CD4-positive, alpha-beta memory T cell (primary cell): ENCODE measurements at regions of chr7 and their contacts with region 1.

Region 1: DNA sequence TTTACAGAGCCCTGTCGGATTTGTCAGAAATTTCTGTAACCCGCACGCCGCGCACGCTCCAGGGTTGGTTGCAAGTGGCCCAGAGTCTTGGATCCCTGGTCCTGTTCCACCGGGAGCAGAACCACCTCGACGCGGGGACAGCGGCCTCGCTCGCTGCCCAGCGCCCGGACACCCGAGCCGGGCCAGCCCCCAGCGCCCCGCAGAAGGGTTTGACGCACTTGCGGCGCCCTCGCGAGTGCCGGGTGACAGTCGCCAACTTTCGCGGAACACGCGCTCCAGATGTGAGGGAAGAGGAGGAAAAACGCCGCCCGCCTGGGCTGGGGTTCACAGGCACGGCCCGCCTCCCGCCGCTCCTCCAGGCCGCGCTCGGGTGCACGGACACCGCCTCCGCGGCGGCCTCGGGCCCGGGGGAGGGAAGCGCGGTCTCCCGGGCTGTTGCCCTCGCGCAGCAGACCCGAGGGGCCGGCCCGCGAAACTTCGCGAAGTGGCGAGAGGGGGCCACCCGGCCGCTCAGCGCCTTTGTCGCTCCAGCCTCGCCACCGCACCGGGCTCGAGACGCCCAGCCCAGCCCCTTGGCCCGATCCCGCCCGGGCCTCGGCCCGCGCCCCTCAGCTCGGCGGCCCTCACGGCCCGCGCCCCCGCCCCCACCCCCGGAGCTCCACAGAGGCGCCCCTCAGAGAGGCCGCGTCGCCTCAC is 514 bp downstream of the RNF216 start:
- DNase-seq: peak in 4 of 5 donors; percentile 22 to 44 (median 37)
- H3K4me3 ChIP-seq: peak overlapping the region in 1 of 2 donors; percentile 57
- H3K4me3 Mint-ChIP-seq: peak overlapping the region; percentile 77 to 93 (median 84)
- H3K27ac ChIP-seq: peak overlapping the region; percentile 79
- H3K27ac Mint-ChIP-seq: peak overlapping the region; percentile 90 to 93 (median 91)
- H3K4me1 ChIP-seq: peaks cover 50% of the 10 kb centered on the region
- H3K4me1 Mint-ChIP-seq: peaks cover 35 to 50% (median 41%) of the 10 kb centered on the region in 4 donors
- H3K27me3 ChIP-seq: no peaks in the 10 kb centered on the region
- H3K27me3 Mint-ChIP-seq: no peaks in the 10 kb centered on the region

Region 2: GRCh38 chr7:5766321-5766761 is 14.6 kb before region 1 on chr7:
- CTCF ChIA-PET with region 1: interaction called, 13 read pairs
- POLR2A ChIA-PET with region 1: interaction called, 4 read pairs
- intact Hi-C with region 1: no loop called
- DNase-seq: no peak
- H3K4me3 ChIP-seq: no peak overlapping the region
- H3K4me3 Mint-ChIP-seq: peak overlapping the region in 3 of 8 donors; percentile 15 to 37 (median 31)
- H3K27ac ChIP-seq: no peak overlapping the region
- H3K27ac Mint-ChIP-seq: peak overlapping the region; percentile 9 to 75 (median 44)
- H3K4me1 ChIP-seq: peaks cover 12% of the 10 kb centered on the region
- H3K4me1 Mint-ChIP-seq: peaks cover 22 to 51% (median 40%) of the 10 kb centered on the region in 4 donors
- H3K27me3 ChIP-seq: no peaks in the 10 kb centered on the region
- H3K27me3 Mint-ChIP-seq: no peaks in the 10 kb centered on the region

Region 3: DNA sequence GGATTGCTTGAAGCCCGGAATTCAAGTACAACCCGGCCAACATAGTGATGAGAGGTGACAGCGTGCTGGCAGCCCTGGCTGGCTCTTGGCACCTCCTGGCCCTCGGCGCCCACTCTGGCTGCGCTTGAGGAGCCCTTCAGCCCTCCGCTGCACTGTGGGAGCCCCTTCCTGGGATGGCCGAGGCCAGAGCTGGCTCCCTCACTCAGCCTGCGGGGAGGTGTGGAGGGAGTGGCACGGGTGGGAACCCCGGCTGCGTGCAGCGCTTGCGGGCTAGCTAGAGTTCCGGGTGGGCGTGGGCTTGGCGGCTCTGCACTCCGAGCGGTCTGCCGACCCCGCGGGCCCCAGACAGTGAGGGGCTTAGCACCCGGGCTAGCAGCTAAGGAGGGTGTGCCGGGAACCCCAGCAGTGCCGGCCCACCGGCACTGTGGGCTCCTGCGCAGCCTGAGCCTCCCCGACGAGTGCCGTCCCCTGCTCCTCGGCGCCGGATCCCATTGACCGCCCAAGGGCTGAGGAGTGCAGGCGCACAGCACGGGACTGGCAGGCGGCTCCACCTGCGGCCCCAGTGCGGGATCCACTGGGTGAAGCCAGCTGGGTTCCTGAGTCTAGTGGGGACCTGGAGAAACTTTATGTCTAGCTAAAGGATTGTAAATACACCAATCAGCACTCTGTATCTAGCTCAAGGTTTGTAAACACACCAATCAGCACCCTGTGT is 12.6 kb after region 1 on chr7:
- CTCF ChIA-PET with region 1: interaction called, 11 read pairs
- POLR2A ChIA-PET with region 1: interaction called, 4 read pairs
- intact Hi-C with region 1: no loop called
- DNase-seq: no peak
- H3K4me3 ChIP-seq: no peak overlapping the region
- H3K4me3 Mint-ChIP-seq: no peak overlapping the region
- H3K27ac ChIP-seq: no peak overlapping the region
- H3K27ac Mint-ChIP-seq: no peak overlapping the region
- H3K4me1 ChIP-seq: no peaks in the 10 kb centered on the region
- H3K4me1 Mint-ChIP-seq: peaks cover 0 to 5% (median 1%) of the 10 kb centered on the region in 4 donors
- H3K27me3 ChIP-seq: no peaks in the 10 kb centered on the region
- H3K27me3 Mint-ChIP-seq: no peaks in the 10 kb centered on the region

Region 4: GRCh38 chr7:5822742-5823503 is 42.0 kb after region 1 on chr7:
- CTCF ChIA-PET with region 1: interaction called, 13 read pairs
- POLR2A ChIA-PET with region 1: interaction called, 28 read pairs
- intact Hi-C with region 1: loop called (anchors 1 kb)
- DNase-seq: peak; percentile 98 to 100 (median 99)
- H3K4me3 ChIP-seq: peak overlapping the region; percentile 79 to 88
- H3K4me3 Mint-ChIP-seq: peak overlapping the region; percentile 84 to 95 (median 91)
- H3K27ac ChIP-seq: peak overlapping the region; percentile 79
- H3K27ac Mint-ChIP-seq: peak overlapping the region; percentile 81 to 98 (median 93)
- H3K4me1 ChIP-seq: peaks cover 33% of the 10 kb centered on the region
- H3K4me1 Mint-ChIP-seq: peaks cover 13 to 42% (median 27%) of the 10 kb centered on the region in 4 donors
- H3K27me3 ChIP-seq: no peaks in the 10 kb centered on the region
- H3K27me3 Mint-ChIP-seq: no peaks in the 10 kb centered on the region